Sigmoid colon (tissue), 7 donors: ENCODE measurements at regions of chr14 and their contacts with region 1.

Region 1: DNA sequence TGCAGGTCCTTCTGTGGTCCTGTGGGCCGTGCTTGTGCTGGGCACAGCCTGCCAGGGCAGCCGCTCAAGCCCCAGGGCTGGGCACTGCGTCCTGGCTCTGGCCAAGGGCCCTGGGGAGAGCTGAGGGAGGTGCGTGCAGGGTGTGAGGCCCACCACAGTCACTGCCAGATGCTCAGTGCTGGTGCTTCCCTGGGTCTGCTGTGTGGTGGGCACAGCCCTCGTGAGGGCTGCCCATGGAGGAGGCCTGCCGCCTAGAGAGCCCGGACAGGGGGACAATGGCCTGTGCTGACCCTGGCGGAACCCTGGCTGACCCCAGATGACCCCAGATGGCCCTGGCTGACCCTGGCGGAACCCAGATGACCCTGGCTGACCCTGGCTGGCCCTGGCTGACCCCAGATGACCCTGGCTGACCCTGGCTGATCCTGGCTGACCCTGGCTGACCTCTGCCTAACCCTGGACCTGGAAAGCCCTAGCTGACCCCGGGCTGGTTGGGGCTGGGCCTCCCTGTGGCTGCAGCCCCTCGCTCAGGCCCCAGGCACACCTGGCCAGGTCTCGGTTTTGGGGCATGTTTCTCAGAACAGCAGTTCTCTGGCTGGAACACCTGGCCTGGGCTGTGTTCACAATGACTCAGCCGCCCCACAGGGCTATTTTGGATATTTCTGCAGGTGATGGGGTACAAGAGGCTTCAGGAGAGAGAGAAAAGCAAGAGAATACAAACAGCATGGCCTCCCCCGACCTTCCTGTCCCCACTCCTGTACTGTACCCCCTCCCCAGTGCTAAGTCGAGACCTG is 55.4 kb downstream of the TMEM121 start:
- DNase-seq: peak; percentile 56
- H3K4me3 ChIP-seq: no peak overlapping the region
- H3K27ac ChIP-seq: no peak overlapping the region
- H3K4me1 ChIP-seq: no peaks in the 10 kb centered on the region
- H3K27me3 ChIP-seq: no peaks in the 10 kb centered on the region
- CTCF ChIP-seq: no peak
- EP300 ChIP-seq: no peak
- POLR2A ChIP-seq: no peak

Region 2: DNA sequence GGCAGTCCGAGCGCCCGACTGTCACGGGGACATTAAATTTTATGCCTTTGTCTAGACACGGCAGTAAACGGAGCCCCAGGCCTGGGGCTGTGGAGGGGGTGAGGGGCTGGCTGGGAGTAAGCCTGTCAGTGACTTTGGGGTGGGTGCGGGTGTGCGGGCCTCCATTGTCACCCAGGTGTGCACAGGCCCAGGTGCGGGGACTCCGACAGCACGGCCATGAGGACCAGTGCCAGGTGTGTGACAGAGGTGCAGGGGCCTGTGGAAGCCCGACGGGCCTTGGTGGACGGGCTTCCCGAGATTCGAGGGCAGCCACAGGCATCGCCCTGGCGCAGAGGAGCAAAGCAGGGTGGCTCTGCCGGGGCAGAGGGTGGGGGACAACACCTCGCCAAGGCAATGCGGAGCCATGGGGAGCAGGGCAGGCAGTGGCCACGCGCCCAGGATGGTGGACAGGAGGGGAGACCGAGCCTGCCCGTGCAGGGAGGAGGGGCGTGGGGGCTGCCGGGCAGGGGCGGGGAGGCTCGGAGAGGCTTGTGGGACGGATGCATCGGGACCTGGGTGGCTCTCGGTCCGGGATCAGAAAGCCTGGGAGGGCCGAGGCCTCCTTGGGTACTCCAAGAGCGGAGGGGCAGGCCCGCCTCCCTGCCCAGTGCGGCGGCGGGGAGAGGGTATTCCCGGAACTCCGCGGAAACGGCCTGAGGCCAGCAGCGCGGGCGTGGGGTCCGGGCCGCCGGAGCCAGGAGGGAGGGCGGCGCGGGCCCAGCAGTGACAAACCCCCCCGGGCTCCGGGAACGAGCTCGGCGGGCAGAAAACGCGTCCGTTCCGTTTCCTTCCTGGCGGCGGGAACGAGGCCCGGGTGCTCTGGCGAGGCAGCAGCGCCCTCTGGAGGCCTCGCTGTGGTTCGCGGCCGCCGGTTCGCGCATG is 53.8 kb before region 1 on chr14:
- intact Hi-C with region 1: no loop called
- DNase-seq: peak; percentile 87
- H3K4me3 ChIP-seq: peak overlapping the region; percentile 56 to 75 (median 60)
- H3K27ac ChIP-seq: peak overlapping the region; percentile 67 to 76 (median 73)
- H3K4me1 ChIP-seq: peaks cover 0 to 38% (median 32%) of the 10 kb centered on the region in 4 donors
- H3K27me3 ChIP-seq: peaks cover 0 to 21% (median 19%) of the 10 kb centered on the region in 3 donors
- CTCF ChIP-seq: peak; percentile 53 to 85 (median 71)
- EP300 ChIP-seq: no peak
- POLR2A ChIP-seq: peak in 1 of 2 donors; percentile 15

Region 3: DNA sequence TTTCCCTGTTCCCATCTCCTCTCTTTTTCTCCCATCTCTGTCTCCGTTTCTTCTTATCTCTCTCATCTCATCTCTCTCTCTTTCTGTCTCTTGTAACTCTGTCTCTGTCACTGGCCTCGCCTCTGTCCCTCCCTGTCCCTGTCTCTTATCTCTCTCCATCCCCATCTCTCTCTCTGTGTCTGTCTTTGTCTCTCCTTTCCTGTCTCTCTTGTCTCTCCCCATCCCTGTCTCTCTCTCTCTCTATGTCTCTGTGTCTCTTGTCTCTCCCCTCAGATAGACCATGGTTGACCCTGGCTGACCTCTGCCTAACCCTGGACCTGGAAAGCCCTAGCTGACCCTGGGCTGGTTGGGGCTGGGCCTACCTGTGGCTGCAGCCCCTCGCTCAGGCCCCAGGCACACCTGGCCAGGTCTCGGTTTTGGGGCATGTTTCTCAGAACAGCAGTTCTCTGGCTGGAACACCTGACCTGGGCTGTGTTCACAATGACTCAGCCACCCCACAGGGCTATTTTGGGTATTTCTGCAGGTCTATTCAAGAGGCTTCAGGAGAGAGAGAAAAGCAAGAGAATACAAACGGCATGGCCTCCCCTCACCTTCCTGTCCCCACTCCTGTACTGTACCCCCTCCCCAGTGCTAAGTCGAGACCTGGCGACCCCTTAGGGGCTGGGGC is 119.0 kb after region 1 on chr14:
- intact Hi-C with region 1: loop called (anchors 5 kb)
- DNase-seq: peak; percentile 40
- H3K4me3 ChIP-seq: no peak overlapping the region
- H3K27ac ChIP-seq: no peak overlapping the region
- H3K4me1 ChIP-seq: no peaks in the 10 kb centered on the region
- H3K27me3 ChIP-seq: no peaks in the 10 kb centered on the region
- CTCF ChIP-seq: no peak
- EP300 ChIP-seq: no peak
- POLR2A ChIP-seq: no peak